ENCODE measurements at regions of chr14 and their contacts with region 1.

Region 1: DNA sequence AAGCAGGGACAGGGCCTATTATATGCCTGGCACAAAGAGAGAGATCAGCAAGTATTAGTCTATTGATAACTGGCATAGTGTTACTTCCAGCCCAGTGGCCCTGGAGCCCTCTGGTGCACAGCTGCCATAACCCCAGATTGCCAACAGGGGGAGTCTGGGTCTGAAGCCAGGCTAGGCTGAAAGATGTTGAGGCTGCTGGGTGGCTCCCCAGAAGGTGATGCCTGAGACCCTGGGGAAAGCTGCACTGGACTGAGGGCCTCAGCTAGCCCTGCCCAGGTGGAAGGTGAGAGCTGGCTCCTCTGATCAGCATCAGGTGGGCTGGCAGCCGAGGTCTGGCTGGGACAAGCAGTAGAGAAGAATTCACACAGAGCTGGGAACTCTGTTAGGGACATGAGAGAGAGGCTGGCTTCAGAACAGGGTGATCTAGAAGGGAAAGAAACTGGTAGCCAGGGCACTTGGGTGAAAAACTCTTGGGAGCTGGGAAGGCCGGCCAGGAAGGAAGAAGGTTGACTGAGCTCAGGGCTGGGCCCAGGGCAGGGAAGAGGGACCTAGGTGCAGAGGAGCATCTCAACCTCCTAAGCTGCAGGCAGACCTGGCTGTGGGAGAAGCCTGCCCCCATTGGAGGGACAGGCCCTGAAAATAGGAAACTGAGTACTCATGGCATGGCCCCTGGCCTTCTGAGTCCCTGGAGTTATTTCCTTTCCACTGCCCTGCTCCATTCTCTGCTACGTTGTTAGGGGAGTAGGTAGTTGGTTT is 3.9 kb downstream of the GZMH start:
- DNase-seq: no peak
- ATAC-seq: peak; percentile 98
- H3K4me3 ChIP-seq: no peak overlapping the region
- H3K27ac ChIP-seq: no peak overlapping the region
- H3K4me1 ChIP-seq: peaks cover 8% of the 10 kb centered on the region
- H3K27me3 ChIP-seq: no peaks in the 10 kb centered on the region
- CTCF ChIP-seq: peak; percentile 73 to 98 (median 97)
- EP300 ChIP-seq: no peak
- POLR2A ChIP-seq: no peak
- RAD21 ChIP-seq: peak; percentile 93

Region 2: GRCh38 chr14:24481622-24482324 is 123.8 kb before region 1 on chr14:
- CTCF ChIA-PET with region 1: interaction called, 6 read pairs
- POLR2A ChIA-PET with region 1: no interaction called
- RAD21 ChIA-PET with region 1: no interaction called
- SMC1A ChIA-PET with region 1: no interaction called
- in situ Hi-C with region 1: no loop called
- intact Hi-C with region 1: loop called (anchors 10 kb)
- DNase-seq: peak; percentile 17
- ATAC-seq: peak; percentile 99
- H3K4me3 ChIP-seq: no peak overlapping the region
- H3K27ac ChIP-seq: no peak overlapping the region
- H3K4me1 ChIP-seq: peaks cover 13% of the 10 kb centered on the region
- H3K27me3 ChIP-seq: no peaks in the 10 kb centered on the region
- CTCF ChIP-seq: peak; percentile 78 to 97 (median 90)
- EP300 ChIP-seq: no peak
- POLR2A ChIP-seq: peak; percentile 28; the same call in 1 of the 2 replicates
- RAD21 ChIP-seq: peak; percentile 90

Measured in GM12878 (cell line).